ENCODE measurements at regions of chr17 and their contacts with region 1.

Region 1: GRCh38 chr17:29931231-29931932 is 1.4 kb upstream of the SSH2 start:
- DNase-seq: peak; percentile 29 to 89 (median 78)
- ATAC-seq: peak; percentile 84
- H3K4me3 ChIP-seq: peak overlapping the region; percentile 81
- H3K4me3 Mint-ChIP-seq: no peak overlapping the region
- H3K27ac ChIP-seq: peak overlapping the region; percentile 85
- H3K27ac Mint-ChIP-seq: no peak overlapping the region
- H3K4me1 ChIP-seq: peaks cover 13 to 25% of the 10 kb centered on the region in 2 donors
- H3K4me1 Mint-ChIP-seq: peaks cover 24 to 35% (median 27%) of the 10 kb centered on the region in 7 donors
- H3K27me3 ChIP-seq: no peaks in the 10 kb centered on the region
- H3K27me3 Mint-ChIP-seq: peaks cover 0 to 2% (median 0%) of the 10 kb centered on the region in 5 donors

Region 2: DNA sequence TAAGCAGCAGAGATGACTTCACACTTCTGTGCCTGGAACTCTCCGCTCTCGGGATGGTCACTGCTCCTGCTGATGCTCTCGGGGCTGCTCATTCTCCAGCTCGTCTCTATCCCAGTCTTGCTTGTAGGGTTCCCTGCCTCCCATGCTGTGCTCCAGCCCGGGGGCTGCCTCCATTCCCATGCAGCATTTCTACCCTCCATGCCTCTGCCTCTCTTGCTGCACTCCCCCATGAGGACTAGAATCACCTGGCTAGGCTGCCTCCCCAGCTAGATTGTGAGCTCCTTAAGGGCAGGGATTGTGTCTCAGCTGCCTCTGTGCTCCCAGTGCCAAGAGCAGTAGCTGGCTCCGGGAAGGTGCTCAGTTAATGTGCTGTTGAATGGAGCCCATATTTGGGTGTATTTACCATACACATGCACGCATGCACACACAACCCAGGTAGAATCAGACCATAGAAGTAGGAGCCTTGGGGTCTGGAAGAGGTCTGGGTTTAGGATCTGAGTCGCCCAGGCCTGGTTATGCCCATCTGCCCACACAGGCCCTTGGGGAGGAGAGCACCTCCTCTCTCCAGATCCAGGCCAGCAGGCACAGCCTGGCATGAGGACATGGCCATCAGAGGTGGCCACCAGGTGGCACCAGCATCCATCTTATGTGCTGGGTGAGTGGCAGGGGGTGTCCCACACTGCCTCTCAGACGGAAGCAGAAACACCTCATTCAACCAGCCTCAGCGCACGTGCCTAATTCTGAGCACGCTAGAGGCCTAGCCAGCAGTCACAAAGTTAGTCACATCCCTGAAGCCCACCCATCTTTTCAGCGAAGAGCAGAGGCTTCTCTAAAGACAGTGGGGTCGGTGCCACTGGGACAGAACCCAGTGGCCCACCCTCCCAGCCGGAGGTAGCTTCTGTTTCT is 351.3 kb before region 1 on chr17:
- CTCF ChIA-PET with region 1: interaction called, 4 read pairs
- POLR2A ChIA-PET with region 1: interaction called, 6 read pairs
- intact Hi-C with region 1: loop called in 1 of 2 experiments (anchors 1 kb)
- DNase-seq: peak; percentile 79 to 90 (median 87)
- ATAC-seq: peak; percentile 99
- H3K4me3 ChIP-seq: no peak overlapping the region
- H3K4me3 Mint-ChIP-seq: peak overlapping the region in 2 of 10 donors; percentile 2 to 32
- H3K27ac ChIP-seq: peak overlapping the region; percentile 53
- H3K27ac Mint-ChIP-seq: peak overlapping the region; percentile 7 to 96 (median 81)
- H3K4me1 ChIP-seq: peaks cover 2 to 17% of the 10 kb centered on the region in 2 donors
- H3K4me1 Mint-ChIP-seq: peaks cover 21 to 24% (median 22%) of the 10 kb centered on the region in 7 donors
- H3K27me3 ChIP-seq: no peaks in the 10 kb centered on the region
- H3K27me3 Mint-ChIP-seq: no peaks in the 10 kb centered on the region

Region 3: DNA sequence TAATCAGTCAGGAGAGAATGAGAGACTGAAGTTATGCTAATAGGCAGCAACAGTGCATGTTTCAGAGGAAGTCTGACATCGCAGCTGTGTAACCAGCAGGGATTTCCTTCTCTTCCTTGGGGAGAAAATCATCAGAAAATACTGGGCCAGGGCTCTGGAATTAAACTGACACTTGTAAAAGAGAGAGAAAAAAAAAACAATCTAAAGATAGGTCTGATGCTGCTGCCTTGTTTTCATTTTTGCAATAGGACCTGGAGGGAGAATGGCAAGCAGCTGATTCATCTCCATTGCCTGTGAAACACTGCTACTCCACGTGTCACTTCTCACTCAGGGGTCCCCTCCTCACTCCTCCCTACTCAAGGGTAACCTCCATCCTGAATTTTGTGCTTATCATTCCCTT is 291.0 kb before region 1 on chr17:
- CTCF ChIA-PET with region 1: interaction called, 22 read pairs
- POLR2A ChIA-PET with region 1: interaction called, 4 read pairs
- intact Hi-C with region 1: loop called (anchors 1 to 5 kb)
- DNase-seq: no peak
- ATAC-seq: no peak
- H3K4me3 ChIP-seq: no peak overlapping the region
- H3K4me3 Mint-ChIP-seq: no peak overlapping the region
- H3K27ac ChIP-seq: no peak overlapping the region
- H3K27ac Mint-ChIP-seq: peak overlapping the region in 8 of 9 donors; percentile 40 to 88 (median 61)
- H3K4me1 ChIP-seq: no peaks in the 10 kb centered on the region
- H3K4me1 Mint-ChIP-seq: peaks cover 0 to 35% (median 19%) of the 10 kb centered on the region in 7 donors
- H3K27me3 ChIP-seq: no peaks in the 10 kb centered on the region
- H3K27me3 Mint-ChIP-seq: no peaks in the 10 kb centered on the region

Region 4: DNA sequence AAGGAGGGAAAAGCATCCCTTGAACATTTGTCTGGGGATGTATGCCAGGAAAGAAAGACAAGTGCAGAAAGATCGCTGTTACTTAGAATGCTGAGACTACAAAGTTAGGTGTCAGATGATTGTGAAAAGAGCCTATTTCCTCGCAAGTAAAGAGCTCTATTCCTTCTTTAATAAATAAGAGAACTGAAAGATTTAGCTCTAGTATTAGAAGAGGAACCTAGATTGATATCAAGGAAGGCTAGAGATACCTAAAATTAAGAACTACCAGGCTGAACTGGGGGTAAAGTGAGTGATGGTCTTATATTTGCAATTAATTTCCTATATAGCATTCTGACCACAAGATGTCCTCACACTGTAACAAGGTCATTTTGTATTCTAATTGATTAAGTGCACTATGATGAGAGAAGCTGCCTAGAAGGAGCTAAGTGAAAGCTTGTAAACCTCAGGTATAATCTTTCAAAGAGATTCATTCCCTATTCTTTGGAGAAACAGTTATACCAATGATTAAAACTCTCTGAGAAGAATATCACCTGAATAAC is 63.7 kb before region 1 on chr17:
- CTCF ChIA-PET with region 1: interaction called, 21 read pairs
- POLR2A ChIA-PET with region 1: interaction called, 4 read pairs
- intact Hi-C with region 1: loop called in 1 of 2 experiments (anchors 1 kb)
- DNase-seq: no peak
- ATAC-seq: no peak
- H3K4me3 ChIP-seq: no peak overlapping the region
- H3K4me3 Mint-ChIP-seq: no peak overlapping the region
- H3K27ac ChIP-seq: no peak overlapping the region
- H3K27ac Mint-ChIP-seq: peak overlapping the region in 2 of 9 donors; percentile 4 to 62
- H3K4me1 ChIP-seq: no peaks in the 10 kb centered on the region
- H3K4me1 Mint-ChIP-seq: peaks cover 7 to 42% (median 22%) of the 10 kb centered on the region in 7 donors
- H3K27me3 ChIP-seq: no peaks in the 10 kb centered on the region
- H3K27me3 Mint-ChIP-seq: no peaks in the 10 kb centered on the region

Region 5: GRCh38 chr17:29948448-29949215 is 17.2 kb after region 1 on chr17:
- CTCF ChIA-PET with region 1: no interaction called
- POLR2A ChIA-PET with region 1: no interaction called
- intact Hi-C with region 1: no loop called
- DNase-seq: no peak
- ATAC-seq: peak; percentile 62
- H3K4me3 ChIP-seq: no peak overlapping the region
- H3K4me3 Mint-ChIP-seq: no peak overlapping the region
- H3K27ac ChIP-seq: no peak overlapping the region
- H3K27ac Mint-ChIP-seq: no peak overlapping the region
- H3K4me1 ChIP-seq: no peaks in the 10 kb centered on the region
- H3K4me1 Mint-ChIP-seq: peaks cover 0 to 9% (median 8%) of the 10 kb centered on the region in 7 donors
- H3K27me3 ChIP-seq: no peaks in the 10 kb centered on the region
- H3K27me3 Mint-ChIP-seq: peaks cover 0 to 3% (median 0%) of the 10 kb centered on the region in 5 donors

Region 6: DNA sequence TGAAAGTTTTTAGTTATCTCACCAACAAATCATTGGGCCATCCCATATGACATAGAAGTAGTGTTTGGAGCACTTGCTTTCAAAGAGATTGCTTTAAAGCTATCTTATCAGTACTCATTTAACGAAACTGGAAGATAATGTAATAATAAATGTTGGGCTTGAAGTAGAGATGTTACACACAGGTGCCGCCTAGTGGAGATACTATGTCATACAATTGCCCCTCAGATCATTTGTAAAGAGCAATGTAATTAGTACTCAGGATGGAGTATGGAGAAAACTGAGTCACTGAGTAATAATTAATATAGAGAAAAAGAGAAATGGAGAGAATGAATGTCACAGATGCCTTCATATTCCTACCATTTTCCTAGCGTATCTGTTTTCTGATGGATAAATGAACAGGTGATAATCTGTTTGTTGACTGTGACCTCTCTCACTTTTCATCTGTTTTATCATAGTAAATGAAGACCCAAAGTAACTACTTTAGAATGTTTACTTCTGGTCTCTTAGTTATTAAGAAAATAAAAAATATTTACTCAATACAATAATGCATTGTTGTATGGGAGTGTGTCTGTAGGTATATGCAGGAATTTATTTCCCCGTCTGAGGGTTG is 90.4 kb after region 1 on chr17:
- CTCF ChIA-PET with region 1: interaction called, 3 read pairs
- POLR2A ChIA-PET with region 1: no interaction called
- intact Hi-C with region 1: loop called (anchors 1 to 5 kb)
- DNase-seq: peak in 6 of 9 donors; percentile 33 to 61 (median 48)
- ATAC-seq: peak; percentile 84
- H3K4me3 ChIP-seq: no peak overlapping the region
- H3K4me3 Mint-ChIP-seq: no peak overlapping the region
- H3K27ac ChIP-seq: no peak overlapping the region
- H3K27ac Mint-ChIP-seq: no peak overlapping the region
- H3K4me1 ChIP-seq: no peaks in the 10 kb centered on the region
- H3K4me1 Mint-ChIP-seq: peaks cover 0 to 2% (median 0%) of the 10 kb centered on the region in 7 donors
- H3K27me3 ChIP-seq: no peaks in the 10 kb centered on the region
- H3K27me3 Mint-ChIP-seq: peaks cover 0 to 16% (median 5%) of the 10 kb centered on the region in 5 donors

Measured in naive thymus-derived CD4-positive, alpha-beta T cell (primary cell).